Activated CD4-positive, alpha-beta memory T cell treated with anti-CD3 and anti-CD28 coated beads for 36 hours (primary cell): ENCODE measurements at regions of chr20 and their contacts with region 1.

Region 1: DNA sequence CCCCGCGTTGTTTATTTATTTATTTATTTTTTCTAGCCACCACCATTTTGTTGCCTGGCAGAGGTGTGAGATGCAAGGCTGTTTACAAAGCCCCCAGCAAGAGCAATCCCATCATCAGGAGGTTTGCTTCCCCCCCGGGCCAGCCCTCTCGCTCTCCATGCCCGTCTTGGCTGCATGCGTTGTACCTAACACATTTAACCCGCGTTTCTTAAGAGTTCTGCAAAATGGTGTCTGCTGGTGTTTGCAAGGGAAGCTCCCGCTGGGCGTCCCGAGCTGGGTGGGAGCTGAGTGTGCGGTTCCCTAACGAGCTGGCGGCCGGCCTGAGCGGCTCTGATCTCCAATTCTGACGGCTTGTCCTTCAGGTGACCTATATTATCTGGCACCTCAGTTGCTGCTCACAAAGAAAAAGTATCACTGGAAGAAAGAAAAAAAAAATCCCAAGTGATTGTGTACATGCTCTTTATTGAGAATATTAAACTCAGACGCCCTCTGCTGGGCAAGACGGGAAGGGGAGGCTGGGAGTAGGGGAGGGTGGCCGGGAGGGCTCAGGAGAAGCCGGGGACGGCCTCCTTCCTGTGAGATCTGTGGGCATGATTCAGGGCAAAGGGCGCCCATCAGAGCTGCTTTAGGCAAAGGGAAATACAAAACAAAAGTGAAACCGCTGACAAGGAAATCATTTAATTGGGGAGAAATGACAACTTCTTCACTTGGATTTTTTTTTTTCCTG is 154.8 kb downstream of the BCAS1 start:
- DNase-seq: peak; percentile 98
- H3K4me3 Mint-ChIP-seq: peak overlapping the region; percentile 91
- H3K27ac Mint-ChIP-seq: peak overlapping the region; percentile 82
- H3K4me1 Mint-ChIP-seq: peaks cover 40% of the 10 kb centered on the region
- H3K27me3 Mint-ChIP-seq: no peaks in the 10 kb centered on the region

Region 2: DNA sequence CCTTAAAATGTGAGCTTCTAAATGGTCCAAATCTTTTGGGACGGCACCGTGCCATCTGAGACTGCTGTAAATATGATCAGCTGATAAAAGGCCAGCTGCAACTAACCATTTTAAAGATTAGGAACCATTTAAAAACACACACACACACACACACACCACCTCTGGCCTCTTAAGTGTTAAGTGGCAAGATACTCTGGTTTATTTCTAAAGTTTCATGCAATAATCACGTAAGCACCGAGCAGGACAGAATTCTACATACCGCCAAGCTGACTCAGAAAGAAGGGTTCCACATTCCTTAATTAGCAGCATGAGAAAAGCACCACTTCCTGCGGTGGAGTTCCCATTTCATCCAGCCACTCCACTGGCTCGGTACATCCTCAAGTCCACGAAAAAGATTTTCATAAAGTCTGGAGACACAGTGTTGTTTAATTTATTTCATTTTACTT is 304.1 kb before region 1 on chr20:
- CTCF ChIA-PET with region 1: interaction called, 10 read pairs
- POLR2A ChIA-PET with region 1: interaction called, 3 read pairs
- intact Hi-C with region 1: no loop called
- DNase-seq: no peak
- H3K4me3 Mint-ChIP-seq: no peak overlapping the region
- H3K27ac Mint-ChIP-seq: no peak overlapping the region
- H3K4me1 Mint-ChIP-seq: peaks cover 32% of the 10 kb centered on the region
- H3K27me3 Mint-ChIP-seq: no peaks in the 10 kb centered on the region

Region 3: DNA sequence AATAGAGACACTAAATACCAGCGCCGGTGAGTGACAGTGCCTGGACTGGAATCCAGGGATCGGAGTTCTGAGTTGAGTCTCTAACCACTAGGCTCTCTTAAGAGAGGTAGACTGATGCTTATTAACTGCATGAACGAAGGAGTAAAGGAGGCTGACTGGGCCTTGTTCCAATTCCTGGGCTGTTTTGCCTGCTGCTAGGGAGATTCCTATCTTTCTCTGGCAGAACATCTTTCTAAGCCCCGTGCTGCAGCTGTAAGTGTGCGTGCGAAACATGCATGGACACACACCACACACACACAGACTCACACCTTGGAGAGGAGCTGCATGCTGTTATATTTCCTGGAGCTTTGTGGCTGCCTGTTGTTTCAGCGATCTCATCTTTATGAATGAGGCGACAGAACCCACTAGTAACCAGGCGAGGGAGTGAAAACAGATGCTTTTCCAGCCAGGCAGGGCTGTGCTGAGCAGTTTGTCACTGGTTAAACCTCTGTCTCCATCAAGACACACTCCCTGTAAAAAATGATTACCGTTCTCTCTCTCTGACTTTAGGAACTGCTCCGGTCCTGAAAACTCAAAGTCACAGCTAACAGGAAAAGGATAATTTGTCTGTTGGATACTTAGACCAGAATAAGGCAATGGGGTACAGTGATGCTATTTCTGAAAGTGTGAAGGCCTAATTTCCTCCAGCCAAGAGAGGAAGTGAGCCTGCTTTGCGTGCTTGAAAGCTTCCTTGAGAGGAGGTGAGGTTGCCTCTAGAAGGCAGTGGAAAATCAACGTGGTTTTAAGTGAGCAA is 164.6 kb before region 1 on chr20:
- CTCF ChIA-PET with region 1: interaction called, 3 read pairs
- POLR2A ChIA-PET with region 1: no interaction called
- intact Hi-C with region 1: loop called (anchors 5 kb)
- DNase-seq: peak; percentile 53
- H3K4me3 Mint-ChIP-seq: peak overlapping the region; percentile 45
- H3K27ac Mint-ChIP-seq: peak overlapping the region; percentile 95
- H3K4me1 Mint-ChIP-seq: peaks cover 60% of the 10 kb centered on the region
- H3K27me3 Mint-ChIP-seq: no peaks in the 10 kb centered on the region

Region 4: DNA sequence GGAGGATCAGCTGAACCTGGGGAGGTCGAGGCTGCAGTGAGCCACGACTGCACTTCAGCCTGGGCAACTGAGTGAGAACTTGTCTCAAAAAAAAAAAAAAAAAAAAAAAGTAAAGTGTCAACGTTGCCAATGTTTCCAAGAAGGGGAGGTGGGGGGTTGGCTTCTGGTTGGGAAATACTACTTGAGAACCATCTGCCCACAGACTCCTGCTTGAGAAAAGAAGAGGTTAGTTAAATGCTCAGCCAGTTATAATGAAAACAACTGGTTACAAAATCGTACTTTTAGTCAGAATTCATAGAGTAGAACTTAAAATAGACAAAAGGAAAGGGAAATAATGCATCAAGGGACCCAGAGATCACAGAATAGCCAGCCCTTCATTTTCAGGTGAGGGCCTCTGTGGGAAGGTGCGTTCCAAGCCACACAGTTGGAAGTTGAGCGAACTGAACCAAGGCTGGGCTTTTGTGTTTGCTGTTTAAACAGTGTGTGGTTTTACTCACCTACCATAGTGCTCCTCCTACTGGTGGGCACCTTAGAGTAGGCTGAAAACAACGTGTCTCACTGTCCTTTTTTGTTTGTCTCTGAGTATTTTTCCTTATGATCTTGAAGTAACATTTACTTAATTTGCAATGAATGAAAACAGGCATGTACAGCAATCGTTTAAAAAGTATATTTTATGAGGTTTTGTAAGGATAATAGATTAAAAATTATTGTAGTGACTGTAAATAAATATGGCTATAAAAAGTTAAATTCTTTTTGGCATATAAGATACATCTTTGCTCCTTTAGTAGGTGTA is 45.9 kb before region 1 on chr20:
- CTCF ChIA-PET with region 1: interaction called, 24 read pairs
- POLR2A ChIA-PET with region 1: interaction called, 6 read pairs
- intact Hi-C with region 1: loop called (anchors 1 kb)
- DNase-seq: peak; percentile 87
- H3K4me3 Mint-ChIP-seq: peak overlapping the region; percentile 52
- H3K27ac Mint-ChIP-seq: peak overlapping the region; percentile 77
- H3K4me1 Mint-ChIP-seq: peaks cover 68% of the 10 kb centered on the region
- H3K27me3 Mint-ChIP-seq: no peaks in the 10 kb centered on the region

Region 5: DNA sequence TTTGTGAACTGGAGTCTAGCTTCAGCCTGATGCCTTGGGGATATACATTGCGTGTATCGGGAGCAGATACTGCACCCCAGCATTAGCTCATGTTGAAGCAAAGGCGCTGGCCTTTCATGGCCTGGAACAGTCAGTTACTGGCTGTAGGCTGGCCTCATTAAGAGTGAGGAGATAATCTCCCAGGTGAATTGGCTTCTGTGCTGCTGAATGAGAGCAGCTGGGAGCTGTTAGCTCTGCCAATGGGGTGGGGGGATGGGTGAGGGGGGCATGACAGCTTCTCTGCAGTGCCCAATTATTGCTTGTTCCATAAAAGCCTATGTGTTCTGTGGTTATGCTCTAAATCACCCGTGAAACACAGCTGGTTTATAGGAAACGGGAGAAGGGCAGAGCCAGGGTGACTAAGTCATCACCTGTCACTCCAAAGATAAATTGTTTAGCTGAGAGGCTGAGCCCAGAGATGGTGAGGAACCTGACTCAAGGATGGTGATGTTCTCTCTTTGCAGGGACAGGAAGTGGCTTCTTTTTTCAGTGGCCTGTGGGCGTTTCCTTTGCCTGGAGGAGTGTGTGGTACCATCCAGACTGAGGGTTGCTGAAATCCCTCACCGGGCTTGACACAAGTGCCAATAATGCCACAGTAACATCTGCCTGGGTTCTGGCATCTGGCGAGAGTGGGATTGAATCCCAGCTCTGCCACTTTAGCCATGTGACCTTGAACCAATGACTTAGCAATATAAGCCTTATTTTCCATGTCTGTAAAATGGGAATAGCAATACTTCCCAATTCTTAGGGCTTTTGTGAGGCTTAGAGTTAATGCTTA is 16.1 kb before region 1 on chr20:
- CTCF ChIA-PET with region 1: interaction called, 37 read pairs
- POLR2A ChIA-PET with region 1: interaction called, 12 read pairs
- intact Hi-C with region 1: loop called (anchors 1 kb)
- DNase-seq: peak; percentile 92
- H3K4me3 Mint-ChIP-seq: no peak overlapping the region
- H3K27ac Mint-ChIP-seq: peak overlapping the region; percentile 77
- H3K4me1 Mint-ChIP-seq: peaks cover 45% of the 10 kb centered on the region
- H3K27me3 Mint-ChIP-seq: no peaks in the 10 kb centered on the region

Region 6: GRCh38 chr20:53934421-53935343 is 19.1 kb after region 1 on chr20:
- CTCF ChIA-PET with region 1: interaction called, 23 read pairs
- POLR2A ChIA-PET with region 1: interaction called, 5 read pairs
- intact Hi-C with region 1: no loop called
- DNase-seq: peak; percentile 44
- H3K4me3 Mint-ChIP-seq: peak overlapping the region; percentile 16
- H3K27ac Mint-ChIP-seq: peak overlapping the region; percentile 49
- H3K4me1 Mint-ChIP-seq: peaks cover 44% of the 10 kb centered on the region
- H3K27me3 Mint-ChIP-seq: no peaks in the 10 kb centered on the region

Region 7: GRCh38 chr20:54017809-54018208 is 102.2 kb after region 1 on chr20:
- CTCF ChIA-PET with region 1: no interaction called
- POLR2A ChIA-PET with region 1: no interaction called
- intact Hi-C with region 1: no loop called
- DNase-seq: no peak
- H3K4me3 Mint-ChIP-seq: no peak overlapping the region
- H3K27ac Mint-ChIP-seq: no peak overlapping the region
- H3K4me1 Mint-ChIP-seq: peaks cover 4% of the 10 kb centered on the region
- H3K27me3 Mint-ChIP-seq: peaks cover 2% of the 10 kb centered on the region